Activated CD4-positive, alpha-beta memory T cell treated with anti-CD3 and anti-CD28 coated beads for 36 hours (primary cell): ENCODE measurements at regions of chr9 and their contacts with region 1.

Region 1: DNA sequence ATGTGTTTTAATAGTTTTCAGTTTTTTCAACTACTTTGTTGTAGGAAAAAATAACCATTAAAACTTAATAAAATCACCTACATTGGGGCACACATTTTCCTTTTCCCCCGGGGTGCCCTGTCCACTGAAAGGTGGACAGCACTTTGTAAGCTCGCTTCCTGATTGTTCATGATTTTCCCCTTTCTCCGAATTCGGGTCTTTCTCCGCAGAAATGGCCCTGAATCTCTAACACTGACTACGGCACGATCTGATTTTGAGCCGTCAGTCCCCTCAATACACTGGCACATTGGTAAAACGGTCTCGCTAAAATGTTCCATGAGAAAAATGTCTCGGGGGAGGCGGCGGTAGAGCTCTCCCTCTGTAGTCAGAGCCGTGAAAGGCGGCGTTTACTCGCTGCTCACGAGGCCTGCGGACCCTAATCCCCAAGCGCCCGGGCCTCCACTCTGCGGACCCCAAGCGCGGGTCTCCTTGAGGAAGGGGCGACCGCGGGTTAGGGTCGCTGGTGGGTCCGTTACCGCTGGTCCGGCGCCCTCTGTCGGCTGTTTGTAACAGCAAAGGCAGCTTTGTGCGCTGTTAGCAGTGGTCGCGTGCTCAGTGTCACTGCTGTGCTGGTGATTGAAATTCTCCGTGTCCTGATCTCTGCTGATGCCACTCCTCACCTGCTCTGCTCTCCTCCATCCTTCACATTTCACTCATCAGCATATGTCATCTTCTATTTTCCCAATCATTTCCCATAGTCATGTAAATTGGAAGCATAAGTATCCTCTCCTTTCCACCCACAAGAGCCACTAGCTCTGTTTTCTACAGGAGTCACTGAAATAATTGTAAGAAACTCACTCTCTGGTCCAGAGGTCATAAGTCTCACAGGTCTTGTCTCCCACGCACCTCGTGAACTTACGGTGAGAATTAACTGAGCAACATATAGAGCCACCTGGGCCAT is 10.8 kb upstream of the IFNA2 start:
- DNase-seq: peak; percentile 64
- H3K4me3 Mint-ChIP-seq: peak overlapping the region; percentile 66
- H3K27ac Mint-ChIP-seq: no peak overlapping the region
- H3K4me1 Mint-ChIP-seq: peaks cover 11% of the 10 kb centered on the region
- H3K27me3 Mint-ChIP-seq: peaks cover 54% of the 10 kb centered on the region

Region 2: DNA sequence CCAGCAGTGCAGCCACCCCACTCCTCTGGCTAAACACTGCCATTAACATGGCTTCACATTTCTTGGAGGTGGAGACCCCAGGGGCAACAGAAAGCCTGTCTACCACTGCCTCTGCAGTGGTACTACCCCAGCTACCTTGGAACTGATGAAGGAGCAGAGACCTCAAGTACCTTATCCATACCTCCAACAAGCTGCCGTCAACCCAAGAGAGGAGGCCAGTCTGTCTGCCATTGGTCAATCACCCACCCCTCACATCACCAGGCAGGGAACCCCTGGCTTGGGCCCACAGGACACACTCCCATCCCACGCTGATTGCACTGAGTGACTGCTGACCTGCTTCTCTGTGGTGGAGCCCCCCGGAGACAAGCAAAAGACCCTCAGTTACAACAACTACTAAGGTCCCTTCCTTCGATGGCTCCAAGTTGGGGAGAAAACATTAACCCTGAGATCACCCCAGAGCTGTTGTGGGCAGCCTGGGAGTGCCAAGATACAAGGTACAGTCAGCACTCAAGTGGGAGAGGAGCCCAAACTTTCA is 161.8 kb before region 1 on chr9:
- CTCF ChIA-PET with region 1: interaction called, 13 read pairs
- POLR2A ChIA-PET with region 1: no interaction called
- intact Hi-C with region 1: loop called (anchors 10 kb)
- DNase-seq: no peak
- H3K4me3 Mint-ChIP-seq: no peak overlapping the region
- H3K27ac Mint-ChIP-seq: no peak overlapping the region
- H3K4me1 Mint-ChIP-seq: peaks cover 9% of the 10 kb centered on the region
- H3K27me3 Mint-ChIP-seq: peaks cover 2% of the 10 kb centered on the region

Region 3: GRCh38 chr9:21252721-21253547 is 143.1 kb before region 1 on chr9:
- CTCF ChIA-PET with region 1: interaction called, 16 read pairs
- POLR2A ChIA-PET with region 1: no interaction called
- intact Hi-C with region 1: no loop called
- DNase-seq: peak; percentile 31
- H3K4me3 Mint-ChIP-seq: no peak overlapping the region
- H3K27ac Mint-ChIP-seq: no peak overlapping the region
- H3K4me1 Mint-ChIP-seq: peaks cover 4% of the 10 kb centered on the region
- H3K27me3 Mint-ChIP-seq: peaks cover 10% of the 10 kb centered on the region

Region 4: DNA sequence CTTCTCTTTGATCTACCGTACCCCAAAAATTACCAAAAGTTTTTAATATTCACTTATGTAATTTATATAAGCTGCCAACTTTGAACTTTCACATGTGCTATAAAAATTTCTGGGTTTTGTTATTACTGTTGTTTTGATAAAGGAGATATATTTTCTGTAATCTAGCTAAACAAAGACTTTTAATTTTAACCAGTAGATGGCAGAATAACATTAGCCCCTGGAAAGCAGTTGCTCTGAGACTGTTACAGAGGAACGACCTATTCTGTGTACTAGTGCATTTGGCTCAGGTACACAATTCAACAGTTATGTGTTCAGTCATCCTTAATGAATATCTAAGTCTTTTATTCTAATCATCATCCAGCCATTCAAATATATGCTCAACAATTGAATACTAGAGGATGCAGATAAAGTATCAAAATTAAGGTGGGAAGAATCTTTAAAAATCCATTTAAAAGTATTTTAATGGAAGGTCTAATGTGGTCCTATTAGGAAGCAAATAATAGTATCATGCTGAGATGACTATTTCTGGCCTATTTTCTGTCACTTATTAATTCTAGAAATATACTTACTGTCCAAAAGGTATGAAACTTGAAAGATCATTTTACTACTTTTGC is 69.4 kb before region 1 on chr9:
- CTCF ChIA-PET with region 1: interaction called, 74 read pairs
- POLR2A ChIA-PET with region 1: interaction called, 4 read pairs
- intact Hi-C with region 1: loop called (anchors 1 kb)
- DNase-seq: no peak
- H3K4me3 Mint-ChIP-seq: no peak overlapping the region
- H3K27ac Mint-ChIP-seq: no peak overlapping the region
- H3K4me1 Mint-ChIP-seq: peaks cover 43% of the 10 kb centered on the region
- H3K27me3 Mint-ChIP-seq: no peaks in the 10 kb centered on the region

Region 5: GRCh38 chr9:21357479-21358460 is 38.3 kb before region 1 on chr9:
- CTCF ChIA-PET with region 1: interaction called, 7 read pairs
- POLR2A ChIA-PET with region 1: no interaction called
- intact Hi-C with region 1: loop called (anchors 2 kb)
- DNase-seq: peak; percentile 30
- H3K4me3 Mint-ChIP-seq: peak overlapping the region; percentile 3
- H3K27ac Mint-ChIP-seq: no peak overlapping the region
- H3K4me1 Mint-ChIP-seq: peaks cover 20% of the 10 kb centered on the region
- H3K27me3 Mint-ChIP-seq: peaks cover 38% of the 10 kb centered on the region

Region 6: GRCh38 chr9:21506626-21507484 is 110.8 kb after region 1 on chr9:
- CTCF ChIA-PET with region 1: no interaction called
- POLR2A ChIA-PET with region 1: no interaction called
- intact Hi-C with region 1: no loop called
- DNase-seq: no peak
- H3K4me3 Mint-ChIP-seq: no peak overlapping the region
- H3K27ac Mint-ChIP-seq: no peak overlapping the region
- H3K4me1 Mint-ChIP-seq: peaks cover 8% of the 10 kb centered on the region
- H3K27me3 Mint-ChIP-seq: peaks cover 4% of the 10 kb centered on the region

Region 7: DNA sequence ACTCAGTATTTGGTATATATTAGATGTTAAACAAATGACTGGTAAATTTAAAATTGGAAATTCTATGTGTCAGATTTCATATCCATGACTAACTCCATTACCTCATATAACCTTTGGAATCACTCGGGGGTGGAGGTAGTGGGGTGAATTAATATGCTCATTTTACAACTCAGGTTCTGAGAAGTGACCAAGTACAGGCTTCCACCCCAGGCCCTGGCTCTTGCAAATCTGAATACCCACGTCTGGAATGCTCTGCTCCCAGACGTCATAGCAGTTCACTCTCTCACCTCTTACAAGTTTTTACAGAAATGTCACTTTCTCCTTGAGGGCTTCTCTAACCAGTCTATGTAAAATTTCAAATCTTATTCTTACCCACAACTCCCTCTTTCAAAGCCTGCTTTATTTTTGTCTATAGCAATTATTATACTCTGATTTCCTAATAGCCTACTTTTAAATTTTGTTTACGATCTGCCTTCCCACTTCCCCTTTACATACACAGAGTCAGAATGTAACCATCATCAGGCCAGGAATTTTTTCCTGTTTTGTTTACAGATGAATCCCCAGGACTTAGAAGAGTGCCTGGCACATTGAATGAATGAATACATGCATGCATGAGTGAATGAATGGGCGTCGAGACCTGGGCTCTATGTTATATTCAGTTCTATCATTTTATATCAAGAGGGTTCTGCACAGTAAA is 220.2 kb after region 1 on chr9:
- CTCF ChIA-PET with region 1: no interaction called
- POLR2A ChIA-PET with region 1: no interaction called
- intact Hi-C with region 1: no loop called
- DNase-seq: no peak
- H3K4me3 Mint-ChIP-seq: no peak overlapping the region
- H3K27ac Mint-ChIP-seq: no peak overlapping the region
- H3K4me1 Mint-ChIP-seq: peaks cover 19% of the 10 kb centered on the region
- H3K27me3 Mint-ChIP-seq: no peaks in the 10 kb centered on the region

Region 8: GRCh38 chr9:21789541-21790037 is 393.5 kb after region 1 on chr9:
- CTCF ChIA-PET with region 1: interaction called, 4 read pairs
- POLR2A ChIA-PET with region 1: no interaction called
- intact Hi-C with region 1: loop called (anchors 1 kb)
- DNase-seq: peak; percentile 59
- H3K4me3 Mint-ChIP-seq: peak overlapping the region; percentile 40
- H3K27ac Mint-ChIP-seq: no peak overlapping the region
- H3K4me1 Mint-ChIP-seq: no peaks in the 10 kb centered on the region
- H3K27me3 Mint-ChIP-seq: peaks cover 8% of the 10 kb centered on the region